Right ventricle myocardium inferior (tissue), 1 donor: ENCODE measurements at regions of chr20 and their contacts with region 1.

Region 1: GRCh38 chr20:20860078-20860806 is 147.8 kb upstream of the RALGAPA2 start:
- DNase-seq: peak; percentile 89
- ATAC-seq: peak; percentile 64

Region 2: DNA sequence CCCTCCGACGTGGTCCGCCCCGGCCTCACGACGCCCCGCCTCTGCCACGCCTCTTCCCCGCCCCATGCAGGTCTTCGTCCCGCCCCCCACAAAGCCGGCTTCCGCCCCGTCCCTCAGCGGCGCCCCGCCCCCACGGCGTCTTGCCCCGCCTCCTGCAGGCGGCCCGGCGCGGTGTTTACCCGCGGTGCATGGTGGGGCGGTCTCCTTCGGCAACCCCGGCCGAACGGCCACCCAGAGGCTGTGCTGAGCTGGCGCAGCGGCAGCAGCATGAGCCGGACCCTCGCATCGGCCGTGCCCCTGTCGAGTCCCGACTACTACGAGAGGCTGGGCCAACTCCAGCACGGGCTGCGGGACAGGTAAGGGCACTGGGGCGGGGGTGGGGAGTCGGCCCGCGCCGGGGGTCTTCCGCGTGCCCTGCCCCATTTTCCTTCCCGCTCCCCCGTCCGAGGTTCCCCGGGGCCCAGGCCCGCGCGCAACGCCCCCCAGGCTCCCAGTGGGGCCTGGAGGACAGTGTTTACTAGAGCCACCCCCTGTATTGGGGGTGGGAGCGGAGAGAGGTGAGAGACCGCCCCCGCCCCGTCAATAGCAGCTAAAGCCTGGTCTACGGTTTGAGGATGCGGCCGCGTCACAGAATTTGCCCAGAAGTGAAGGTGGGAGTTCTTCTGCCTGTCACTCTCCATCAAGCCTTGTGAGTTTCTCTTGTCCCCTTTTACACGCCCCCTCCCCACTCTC is 265.8 kb after region 1 on chr20 and contains the start of gene KIZ:
- intact Hi-C with region 1: loop called (anchors 5 kb)
- DNase-seq: peak; percentile 99
- ATAC-seq: peak; percentile 100
- total RNA-seq, gene KIZ: 28.0 TPM

Region 3: GRCh38 chr20:21505161-21505809 is 645.0 kb after region 1 on chr20:
- intact Hi-C with region 1: loop called (anchors 5 kb)
- DNase-seq: peak; percentile 93
- ATAC-seq: peak; percentile 58

Region 4: GRCh38 chr20:21571841-21572690 is 711.8 kb after region 1 on chr20:
- intact Hi-C with region 1: loop called (anchors 10 kb)
- DNase-seq: no peak
- ATAC-seq: no peak